ENCODE measurements at regions of chr1 and their contacts with region 1.

Region 1: DNA sequence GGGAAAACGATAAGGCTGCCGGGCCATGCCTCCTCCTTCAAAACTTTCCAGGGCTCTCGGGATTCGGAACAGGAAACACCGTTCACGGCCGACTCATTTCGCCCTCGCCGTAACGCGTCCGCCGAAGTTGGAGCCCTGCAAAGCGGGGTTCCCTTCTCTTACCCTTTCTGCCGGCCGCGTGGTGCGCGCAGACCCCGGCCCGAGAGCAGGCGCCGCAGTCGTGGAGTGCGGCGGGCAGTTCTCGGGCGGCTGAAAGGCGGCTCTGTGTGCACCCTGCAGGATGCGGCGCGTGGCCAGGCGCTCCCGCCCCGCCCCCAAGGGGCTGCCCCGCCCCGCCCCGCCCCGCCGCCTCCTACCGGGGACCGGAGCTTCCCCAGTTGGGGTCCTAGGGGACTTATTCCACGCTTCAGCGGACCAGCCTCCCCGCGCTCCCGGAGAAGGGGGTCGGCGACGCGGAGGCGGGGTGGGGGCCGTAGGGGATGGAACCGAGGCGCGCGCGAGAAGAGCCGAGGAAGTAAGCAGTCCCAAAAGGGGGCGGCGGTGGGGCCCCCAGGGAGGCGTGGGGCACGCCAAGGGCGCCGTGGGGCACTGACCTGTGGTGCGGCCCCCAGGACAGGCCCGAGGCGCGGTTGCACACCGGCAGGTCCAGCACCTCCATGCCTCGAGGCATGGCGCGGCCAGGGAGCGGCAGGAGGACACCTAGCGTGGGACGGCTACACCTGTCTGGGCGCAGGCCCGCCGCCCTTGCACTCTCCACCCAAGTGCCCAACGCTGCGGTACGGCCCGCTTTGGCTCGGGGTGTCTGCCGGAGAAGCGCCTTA is at the start of gene MCOLN2:
- DNase-seq: peak; percentile 72
- ATAC-seq: peak; percentile 71
- H3K4me3 ChIP-seq: peak within 1 kb of the TSS; percentile 41 to 78 (median 63)
- H3K4me3 Mint-ChIP-seq: peak within 1 kb of the TSS; percentile 85
- H3K27ac ChIP-seq: peak within 1 kb of the TSS; percentile 50 to 59
- H3K27ac Mint-ChIP-seq: peak within 1 kb of the TSS; percentile 82
- H3K4me1 ChIP-seq: peaks cover 47 to 50% of the 10 kb centered on the region in 2 donors
- H3K4me1 Mint-ChIP-seq: peaks cover 61% of the 10 kb centered on the region
- H3K27me3 ChIP-seq: peaks cover 0 to 10% (median 2%) of the 10 kb centered on the region in 4 experiments
- H3K27me3 Mint-ChIP-seq: no peaks in the 10 kb centered on the region
- CTCF ChIP-seq: no peak
- total RNA-seq, gene MCOLN2: 25.8 and 35.3 TPM in 2 replicates

Region 2: GRCh38 chr1:84077476-84078107 is 919.5 kb before region 1 on chr1:
- CTCF ChIA-PET with region 1: no interaction called
- POLR2A ChIA-PET with region 1: no interaction called
- intact Hi-C with region 1: loop called (anchors 5 kb)
- DNase-seq: peak; percentile 85
- ATAC-seq: peak; percentile 93
- H3K4me3 ChIP-seq: peak overlapping the region; percentile 41 to 86 (median 68)
- H3K4me3 Mint-ChIP-seq: peak overlapping the region; percentile 84
- H3K27ac ChIP-seq: peak overlapping the region; percentile 46 to 70
- H3K27ac Mint-ChIP-seq: peak overlapping the region; percentile 67
- H3K4me1 ChIP-seq: peaks cover 7 to 12% of the 10 kb centered on the region in 2 donors
- H3K4me1 Mint-ChIP-seq: peaks cover 13% of the 10 kb centered on the region
- H3K27me3 ChIP-seq: no peaks in the 10 kb centered on the region
- H3K27me3 Mint-ChIP-seq: no peaks in the 10 kb centered on the region
- CTCF ChIP-seq: no peak

Region 3: DNA sequence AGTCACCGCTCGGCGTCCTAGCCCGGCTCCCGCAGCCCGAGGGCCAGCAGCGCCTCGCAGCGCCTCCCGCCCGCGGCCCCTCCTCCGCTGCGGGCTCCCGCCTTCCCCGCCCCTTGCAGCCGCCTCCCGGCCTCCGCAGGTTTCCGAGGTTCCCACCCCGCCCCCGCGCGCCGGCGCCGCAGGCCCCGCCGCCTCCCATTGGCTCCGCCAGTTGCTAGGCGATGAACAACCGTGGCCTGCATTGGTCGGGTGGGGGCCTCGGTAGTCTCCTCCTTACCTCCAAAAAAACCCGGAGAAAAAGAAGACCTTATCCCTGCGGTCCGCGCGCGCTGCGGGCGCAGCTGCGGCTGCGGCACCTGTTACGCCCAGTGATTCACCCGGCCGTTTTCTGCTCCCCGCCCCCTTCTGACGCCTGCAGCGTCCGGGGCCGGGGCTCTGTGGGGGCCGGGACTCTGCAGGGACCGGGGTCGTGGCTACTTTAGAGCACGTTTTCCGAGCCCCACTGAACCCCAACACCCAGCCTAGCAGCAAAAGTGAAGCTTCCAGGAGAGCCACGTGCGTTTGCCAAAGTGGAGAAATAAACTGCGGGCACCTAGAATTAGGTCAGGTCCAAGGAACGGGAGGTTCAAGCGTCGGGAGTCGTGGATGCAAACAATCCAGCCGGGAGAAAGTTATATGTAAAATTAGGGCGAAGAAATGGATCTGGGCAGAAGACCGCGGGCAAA is 306.5 kb before region 1 on chr1 and contains the start of gene SSX2IP:
- CTCF ChIA-PET with region 1: no interaction called
- POLR2A ChIA-PET with region 1: no interaction called
- intact Hi-C with region 1: loop called (anchors 5 kb)
- DNase-seq: peak; percentile 97
- ATAC-seq: peak; percentile 86
- H3K4me3 ChIP-seq: peak within 1 kb of the TSS; percentile 71 to 93 (median 85)
- H3K4me3 Mint-ChIP-seq: peak within 1 kb of the TSS; percentile 80
- H3K27ac ChIP-seq: peak within 1 kb of the TSS; percentile 56 to 64
- H3K27ac Mint-ChIP-seq: peak within 1 kb of the TSS; percentile 62
- H3K4me1 ChIP-seq: peaks cover 12 to 24% of the 10 kb centered on the region in 2 donors
- H3K4me1 Mint-ChIP-seq: peaks cover 27% of the 10 kb centered on the region
- H3K27me3 ChIP-seq: no peaks in the 10 kb centered on the region
- H3K27me3 Mint-ChIP-seq: no peaks in the 10 kb centered on the region
- CTCF ChIP-seq: no peak
- total RNA-seq, gene SSX2IP: 7.1 and 10.3 TPM in 2 replicates

Region 4: GRCh38 chr1:84913555-84913892 is 83.5 kb before region 1 on chr1:
- CTCF ChIA-PET with region 1: no interaction called
- POLR2A ChIA-PET with region 1: no interaction called
- intact Hi-C with region 1: no loop called
- DNase-seq: no peak
- ATAC-seq: no peak
- H3K4me3 ChIP-seq: no peak overlapping the region
- H3K4me3 Mint-ChIP-seq: no peak overlapping the region
- H3K27ac ChIP-seq: no peak overlapping the region
- H3K27ac Mint-ChIP-seq: no peak overlapping the region
- H3K4me1 ChIP-seq: no peaks in the 10 kb centered on the region
- H3K4me1 Mint-ChIP-seq: no peaks in the 10 kb centered on the region
- H3K27me3 ChIP-seq: no peaks in the 10 kb centered on the region
- H3K27me3 Mint-ChIP-seq: peaks cover 20% of the 10 kb centered on the region
- CTCF ChIP-seq: no peak

Region 5: DNA sequence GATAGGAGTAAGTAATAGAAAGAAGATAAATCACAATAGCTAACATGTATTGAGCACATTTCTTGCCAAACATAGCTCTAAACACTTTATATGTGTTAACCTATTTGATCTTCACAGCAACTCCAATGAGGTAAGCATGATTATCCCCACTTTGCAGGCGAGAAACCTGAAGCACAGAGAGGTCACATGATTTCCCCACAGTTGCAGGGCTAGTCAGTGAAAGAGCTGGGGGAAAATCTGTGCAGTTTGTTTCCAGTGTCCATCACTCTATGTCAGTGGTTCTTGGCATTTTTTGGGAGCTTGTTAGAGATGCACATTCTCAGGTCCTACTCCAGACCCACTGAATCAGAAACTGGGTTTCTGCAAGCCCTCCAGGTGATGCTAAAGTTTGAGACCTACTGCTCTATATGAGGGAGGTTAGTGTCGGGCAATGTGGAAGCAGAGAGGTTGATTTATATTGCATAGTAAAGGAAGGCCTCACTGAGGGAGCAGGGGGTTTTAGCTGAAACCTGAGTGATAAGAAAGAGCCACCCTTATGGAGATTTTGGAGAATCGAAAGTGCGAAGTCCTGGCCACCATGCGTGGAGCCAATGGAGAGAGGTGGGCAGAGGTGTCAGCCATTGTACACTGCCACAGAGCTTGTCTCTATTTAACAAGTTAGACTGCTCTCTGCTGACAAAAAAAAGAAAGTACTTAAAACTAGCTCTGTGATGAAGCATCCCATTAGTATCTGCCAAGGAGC is 30.4 kb after region 1 on chr1:
- CTCF ChIA-PET with region 1: interaction called, 17 read pairs
- POLR2A ChIA-PET with region 1: interaction called, 3 read pairs
- intact Hi-C with region 1: loop called (anchors 2 kb)
- DNase-seq: peak; percentile 70
- ATAC-seq: peak; percentile 94
- H3K4me3 ChIP-seq: peak overlapping the region in 3 of 5 experiments; percentile 16 to 40 (median 35)
- H3K4me3 Mint-ChIP-seq: peak overlapping the region; percentile 75
- H3K27ac ChIP-seq: peak overlapping the region in 1 of 2 donors; percentile 25
- H3K27ac Mint-ChIP-seq: peak overlapping the region; percentile 86
- H3K4me1 ChIP-seq: peaks cover 0 to 6% of the 10 kb centered on the region in 2 donors
- H3K4me1 Mint-ChIP-seq: peaks cover 6% of the 10 kb centered on the region
- H3K27me3 ChIP-seq: no peaks in the 10 kb centered on the region
- H3K27me3 Mint-ChIP-seq: no peaks in the 10 kb centered on the region
- CTCF ChIP-seq: peak; percentile 59

Region 6: DNA sequence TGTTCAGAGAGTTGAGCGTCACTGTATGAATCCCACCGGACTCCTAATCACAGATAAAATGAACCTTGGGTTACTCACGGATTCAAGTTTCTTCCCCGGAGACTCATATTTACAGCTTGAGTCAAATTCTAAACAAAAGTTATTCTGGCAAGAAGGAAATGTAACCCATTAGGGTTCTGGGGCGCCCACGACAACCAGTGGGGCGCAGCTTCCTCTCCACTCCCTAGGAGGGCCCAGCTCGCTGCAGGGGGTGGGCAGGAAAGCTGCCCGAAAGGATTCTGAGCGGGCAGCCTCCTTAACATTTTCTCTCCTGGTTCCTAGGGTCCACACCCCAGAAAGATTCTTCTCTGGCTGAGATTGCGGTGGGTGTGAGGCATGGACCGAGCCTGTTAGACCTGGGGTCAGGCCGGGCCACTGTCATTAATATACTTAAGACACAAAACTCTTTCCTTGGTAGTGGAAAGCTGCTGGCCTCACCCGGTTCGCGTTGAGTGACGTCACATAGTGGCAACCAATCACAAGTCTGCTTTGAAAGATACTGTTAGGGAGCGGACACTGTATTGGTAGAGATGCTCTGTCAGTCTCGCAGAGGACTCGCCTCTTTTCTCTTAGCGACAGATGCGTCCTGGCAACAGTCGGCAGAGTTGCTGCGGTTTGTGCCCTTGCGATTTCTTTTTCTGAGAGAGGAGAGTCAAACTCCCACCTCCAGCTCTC is 64.8 kb after region 1 on chr1:
- CTCF ChIA-PET with region 1: no interaction called
- POLR2A ChIA-PET with region 1: no interaction called
- intact Hi-C with region 1: loop called (anchors 2 kb)
- DNase-seq: peak; percentile 94
- ATAC-seq: peak; percentile 99
- H3K4me3 ChIP-seq: peak overlapping the region in 4 of 5 experiments; percentile 45 to 67 (median 55)
- H3K4me3 Mint-ChIP-seq: peak overlapping the region; percentile 92
- H3K27ac ChIP-seq: no peak overlapping the region
- H3K27ac Mint-ChIP-seq: peak overlapping the region; percentile 87
- H3K4me1 ChIP-seq: peaks cover 10 to 13% of the 10 kb centered on the region in 2 donors
- H3K4me1 Mint-ChIP-seq: peaks cover 18% of the 10 kb centered on the region
- H3K27me3 ChIP-seq: peaks cover 0 to 3% (median 0%) of the 10 kb centered on the region in 4 experiments
- H3K27me3 Mint-ChIP-seq: peaks cover 16% of the 10 kb centered on the region
- CTCF ChIP-seq: no peak

Region 7: GRCh38 chr1:85563139-85563538 is 566.1 kb after region 1 on chr1:
- CTCF ChIA-PET with region 1: no interaction called
- POLR2A ChIA-PET with region 1: no interaction called
- intact Hi-C with region 1: no loop called
- DNase-seq: no peak
- ATAC-seq: no peak
- H3K4me3 ChIP-seq: no peak overlapping the region
- H3K4me3 Mint-ChIP-seq: no peak overlapping the region
- H3K27ac ChIP-seq: no peak overlapping the region
- H3K27ac Mint-ChIP-seq: no peak overlapping the region
- H3K4me1 ChIP-seq: no peaks in the 10 kb centered on the region
- H3K4me1 Mint-ChIP-seq: no peaks in the 10 kb centered on the region
- H3K27me3 ChIP-seq: peaks cover 0 to 2% (median 0%) of the 10 kb centered on the region in 4 experiments
- H3K27me3 Mint-ChIP-seq: peaks cover 11% of the 10 kb centered on the region
- CTCF ChIP-seq: no peak

Region 8: GRCh38 chr1:86616871-86617270 is 1619.8 kb after region 1 on chr1:
- CTCF ChIA-PET with region 1: no interaction called
- POLR2A ChIA-PET with region 1: no interaction called
- intact Hi-C with region 1: loop called (anchors 10 kb)
- DNase-seq: peak; percentile 88
- ATAC-seq: peak; percentile 99
- H3K4me3 ChIP-seq: peak overlapping the region in 1 of 5 experiments; percentile 31
- H3K4me3 Mint-ChIP-seq: peak overlapping the region; percentile 27
- H3K27ac ChIP-seq: peak overlapping the region; percentile 65 to 77
- H3K27ac Mint-ChIP-seq: peak overlapping the region; percentile 70
- H3K4me1 ChIP-seq: peaks cover 22 to 23% of the 10 kb centered on the region in 2 donors
- H3K4me1 Mint-ChIP-seq: peaks cover 42% of the 10 kb centered on the region
- H3K27me3 ChIP-seq: no peaks in the 10 kb centered on the region
- H3K27me3 Mint-ChIP-seq: no peaks in the 10 kb centered on the region
- CTCF ChIP-seq: no peak

Measured in B cell (primary cell).